Activated B cell treated with CpG ODN at 0.5 μM for 24 hours (primary cell): ENCODE measurements at regions of chr11 and their contacts with region 1.

Region 1: GRCh38 chr11:65569973-65570918 is at the start of gene ZNRD2:
- DNase-seq: peak; percentile 93
- ATAC-seq: peak; percentile 68
- H3K4me3 Mint-ChIP-seq: peak within 1 kb of the TSS; percentile 99
- H3K27ac Mint-ChIP-seq: peak within 1 kb of the TSS; percentile 99
- H3K4me1 Mint-ChIP-seq: peaks cover 78% of the 10 kb centered on the region
- H3K27me3 Mint-ChIP-seq: no peaks in the 10 kb centered on the region
- CTCF ChIP-seq: no peak
- total RNA-seq, gene ZNRD2: 40.9 and 41.0 TPM in 2 replicates

Region 2: GRCh38 chr11:65134386-65135253 is 435.6 kb before region 1 on chr11 and contains the start of gene SYVN1:
- CTCF ChIA-PET with region 1: no interaction called
- POLR2A ChIA-PET with region 1: interaction called, 7 read pairs
- intact Hi-C with region 1: loop called (anchors 5 kb)
- DNase-seq: peak; percentile 92
- ATAC-seq: peak; percentile 60
- H3K4me3 Mint-ChIP-seq: peak within 1 kb of the TSS; percentile 99
- H3K27ac Mint-ChIP-seq: peak within 1 kb of the TSS; percentile 99
- H3K4me1 Mint-ChIP-seq: peaks cover 64% of the 10 kb centered on the region
- H3K27me3 Mint-ChIP-seq: no peaks in the 10 kb centered on the region
- CTCF ChIP-seq: no peak
- total RNA-seq, gene SYVN1: 232 and 238 TPM in 2 replicates

Region 3: DNA sequence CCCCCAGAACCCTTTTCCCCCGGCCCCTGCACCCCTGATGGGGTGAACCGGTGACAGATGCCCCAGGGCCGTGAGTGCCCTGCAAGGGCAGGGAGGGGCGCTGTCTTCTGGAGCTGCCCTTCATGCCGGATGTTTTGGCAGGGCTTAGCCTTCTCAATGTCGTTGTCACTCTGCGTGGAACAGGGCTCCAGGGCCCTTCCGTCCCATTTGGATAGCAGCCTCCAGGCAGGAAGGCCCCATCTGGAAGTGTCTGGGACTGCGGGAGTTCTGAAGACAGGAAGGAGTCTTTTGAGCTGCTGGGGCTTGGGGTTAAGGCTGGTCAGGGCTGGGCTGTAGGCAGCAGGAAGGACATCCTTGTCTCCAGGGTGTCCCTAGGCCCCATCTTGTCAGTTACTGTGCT is 179.2 kb before region 1 on chr11:
- CTCF ChIA-PET with region 1: no interaction called
- POLR2A ChIA-PET with region 1: no interaction called
- intact Hi-C with region 1: no loop called
- DNase-seq: no peak
- ATAC-seq: no peak
- H3K4me3 Mint-ChIP-seq: peak overlapping the region; percentile 19
- H3K27ac Mint-ChIP-seq: no peak overlapping the region
- H3K4me1 Mint-ChIP-seq: peaks cover 56% of the 10 kb centered on the region
- H3K27me3 Mint-ChIP-seq: no peaks in the 10 kb centered on the region
- CTCF ChIP-seq: no peak

Region 4: DNA sequence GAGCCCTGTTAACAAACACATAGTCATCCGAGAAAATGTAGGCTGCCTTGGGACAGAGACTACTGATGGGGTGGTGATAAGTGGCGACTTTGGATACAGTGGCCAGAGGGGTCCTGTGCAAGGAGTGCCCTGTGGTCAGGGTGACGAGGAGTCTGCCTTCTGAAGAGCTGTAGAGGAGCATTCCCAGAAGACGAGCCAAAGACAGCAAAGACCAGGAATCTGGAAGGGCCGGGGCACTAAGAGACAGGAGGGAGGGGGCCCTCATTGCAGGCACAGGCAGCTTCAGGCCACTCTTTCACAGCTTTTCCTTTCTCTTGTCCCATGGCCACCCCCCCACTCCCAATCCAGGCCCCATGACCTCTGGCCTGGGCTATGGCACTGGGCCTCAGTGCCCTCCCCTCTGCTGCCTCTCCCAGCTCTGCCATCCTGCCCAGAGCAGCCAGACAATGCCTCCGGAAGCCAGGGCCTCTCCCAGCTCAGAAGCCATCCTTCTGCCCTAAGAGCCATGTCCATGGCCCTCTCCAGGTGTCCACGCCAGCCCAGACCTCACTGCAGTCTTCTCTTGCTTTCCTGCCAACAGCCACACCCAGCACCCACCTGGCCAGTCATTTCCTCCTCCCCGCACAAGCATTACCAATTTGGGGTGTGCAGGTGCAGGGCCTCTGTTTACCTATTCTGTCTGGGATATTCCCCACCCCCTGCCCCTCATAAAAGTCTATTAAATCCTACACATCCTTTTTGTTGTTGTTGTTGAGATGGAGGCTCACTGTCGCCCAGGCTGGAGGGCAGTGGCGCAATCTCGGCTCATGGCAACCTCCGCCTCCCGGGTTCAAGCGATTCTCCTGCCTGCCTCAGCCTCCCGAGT is 79.9 kb before region 1 on chr11:
- CTCF ChIA-PET with region 1: no interaction called
- POLR2A ChIA-PET with region 1: no interaction called
- intact Hi-C with region 1: no loop called
- DNase-seq: no peak
- ATAC-seq: no peak
- H3K4me3 Mint-ChIP-seq: no peak overlapping the region
- H3K27ac Mint-ChIP-seq: peak overlapping the region; percentile 50
- H3K4me1 Mint-ChIP-seq: peaks cover 71% of the 10 kb centered on the region
- H3K27me3 Mint-ChIP-seq: no peaks in the 10 kb centered on the region
- CTCF ChIP-seq: no peak

Region 5: DNA sequence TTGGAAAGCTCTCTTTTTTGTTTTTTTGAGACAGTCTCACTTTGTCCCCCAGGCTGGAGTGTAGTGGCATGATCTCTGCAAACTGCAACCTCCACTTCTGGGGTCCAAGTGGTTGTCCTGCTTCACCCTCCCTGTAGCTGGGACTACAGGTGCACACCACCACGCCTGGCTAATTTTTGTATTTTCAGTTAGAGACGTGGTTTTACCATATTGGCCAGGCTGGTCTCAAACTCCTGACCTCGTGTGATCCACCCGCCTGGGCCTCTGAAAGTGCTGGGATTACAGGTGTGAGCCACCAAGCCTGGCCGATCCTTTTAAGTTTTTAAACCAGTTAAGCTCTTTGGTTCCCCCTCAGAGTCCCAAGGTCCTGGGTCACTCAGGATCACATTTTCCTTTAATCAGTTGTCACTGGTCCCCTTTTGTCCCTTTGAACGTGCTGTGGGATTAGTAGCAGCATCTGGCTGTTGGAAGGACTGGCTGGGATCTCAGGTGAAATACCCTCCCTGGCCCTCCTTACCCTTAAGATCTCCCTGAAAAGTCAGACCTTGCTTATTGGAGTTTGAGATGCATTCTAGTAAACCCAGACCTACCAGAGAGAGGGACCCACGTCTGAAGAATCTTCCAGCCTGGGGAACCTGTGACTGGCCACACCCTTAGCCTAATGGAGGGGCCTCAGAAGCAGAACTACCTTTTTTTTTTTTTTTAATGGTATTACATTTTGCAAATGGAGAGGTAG is 63.3 kb before region 1 on chr11:
- CTCF ChIA-PET with region 1: interaction called, 3 read pairs
- POLR2A ChIA-PET with region 1: interaction called, 10 read pairs
- intact Hi-C with region 1: no loop called
- DNase-seq: no peak
- ATAC-seq: peak; percentile 49
- H3K4me3 Mint-ChIP-seq: no peak overlapping the region
- H3K27ac Mint-ChIP-seq: peak overlapping the region; percentile 84
- H3K4me1 Mint-ChIP-seq: peaks cover 62% of the 10 kb centered on the region
- H3K27me3 Mint-ChIP-seq: no peaks in the 10 kb centered on the region
- CTCF ChIP-seq: no peak

Region 6: DNA sequence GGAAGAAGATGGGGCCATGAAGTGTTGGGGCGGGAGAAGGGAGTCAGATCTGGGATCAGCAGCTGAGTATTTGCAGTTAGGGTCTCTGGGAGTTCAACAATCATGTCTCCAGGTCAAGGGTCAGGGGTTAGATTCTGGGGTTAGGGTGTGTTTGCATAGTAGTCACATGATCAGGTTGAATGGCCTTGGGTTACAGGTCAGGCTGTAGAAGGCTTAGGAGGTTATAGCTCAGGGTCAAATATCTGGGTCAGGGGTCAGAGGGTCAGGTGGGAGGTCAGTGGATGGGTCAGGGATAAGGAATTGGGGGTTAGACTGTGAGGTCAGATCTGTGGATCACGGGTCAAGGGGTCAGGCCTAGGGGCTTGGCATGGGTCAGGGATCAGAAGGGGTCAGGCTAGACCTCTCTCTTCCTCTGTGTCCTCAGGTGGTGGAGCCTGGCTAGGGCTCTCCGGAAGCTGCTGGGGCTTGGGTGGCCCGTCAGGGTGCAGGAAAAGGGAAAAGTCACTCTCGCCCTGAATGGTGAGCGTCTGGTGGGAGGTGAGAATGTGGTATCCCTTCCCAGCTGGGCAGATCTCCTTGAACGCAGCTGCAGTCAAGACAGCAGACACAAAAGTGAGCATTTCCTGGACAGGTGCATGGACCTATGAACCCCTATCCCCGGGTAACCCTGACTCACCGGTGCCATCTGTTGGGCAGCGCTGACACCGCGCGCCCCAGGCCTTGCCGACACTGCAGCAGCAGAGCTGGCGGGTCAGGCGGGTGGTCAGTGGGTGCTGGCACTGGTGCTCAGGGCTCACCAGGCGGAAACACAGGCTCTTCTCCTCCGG is 18.5 kb before region 1 on chr11:
- CTCF ChIA-PET with region 1: interaction called, 5 read pairs
- POLR2A ChIA-PET with region 1: interaction called, 17 read pairs
- intact Hi-C with region 1: loop called (anchors 1 kb)
- DNase-seq: peak; percentile 69
- ATAC-seq: peak; percentile 83
- H3K4me3 Mint-ChIP-seq: peak overlapping the region; percentile 24
- H3K27ac Mint-ChIP-seq: peak overlapping the region; percentile 59
- H3K4me1 Mint-ChIP-seq: peaks cover 64% of the 10 kb centered on the region
- H3K27me3 Mint-ChIP-seq: no peaks in the 10 kb centered on the region
- CTCF ChIP-seq: no peak

Region 7: GRCh38 chr11:65593518-65594298 is 23.5 kb after region 1 on chr11:
- CTCF ChIA-PET with region 1: interaction called, 67 read pairs
- POLR2A ChIA-PET with region 1: interaction called, 239 read pairs
- intact Hi-C with region 1: loop called (anchors 1 kb)
- DNase-seq: no peak
- ATAC-seq: peak; percentile 41
- H3K4me3 Mint-ChIP-seq: no peak overlapping the region
- H3K27ac Mint-ChIP-seq: no peak overlapping the region
- H3K4me1 Mint-ChIP-seq: peaks cover 24% of the 10 kb centered on the region
- H3K27me3 Mint-ChIP-seq: no peaks in the 10 kb centered on the region
- CTCF ChIP-seq: peak; percentile 37

Region 8: GRCh38 chr11:65652511-65653231 is 82.4 kb after region 1 on chr11:
- CTCF ChIA-PET with region 1: no interaction called
- POLR2A ChIA-PET with region 1: interaction called, 5 read pairs
- intact Hi-C with region 1: loop called (anchors 1 kb)
- DNase-seq: peak; percentile 98
- ATAC-seq: peak; percentile 89
- H3K4me3 Mint-ChIP-seq: peak overlapping the region; percentile 90
- H3K27ac Mint-ChIP-seq: peak overlapping the region; percentile 95
- H3K4me1 Mint-ChIP-seq: peaks cover 44% of the 10 kb centered on the region
- H3K27me3 Mint-ChIP-seq: no peaks in the 10 kb centered on the region
- CTCF ChIP-seq: no peak

Region 9: GRCh38 chr11:65726660-65727059 is 156.4 kb after region 1 on chr11:
- CTCF ChIA-PET with region 1: no interaction called
- POLR2A ChIA-PET with region 1: no interaction called
- intact Hi-C with region 1: no loop called
- DNase-seq: no peak
- ATAC-seq: no peak
- H3K4me3 Mint-ChIP-seq: no peak overlapping the region
- H3K27ac Mint-ChIP-seq: no peak overlapping the region
- H3K4me1 Mint-ChIP-seq: no peaks in the 10 kb centered on the region
- H3K27me3 Mint-ChIP-seq: peaks cover 3% of the 10 kb centered on the region
- CTCF ChIP-seq: no peak